AG04450 (cell line): ENCODE measurements at regions of chr12 and their contacts with region 1.

Region 1: GRCh38 chr12:94101738-94102660 is 46.4 kb upstream of the PLXNC1 start:
- DNase-seq: peak; percentile 73
- H3K4me3 ChIP-seq: peak overlapping the region; percentile 66
- H3K27ac ChIP-seq: peak overlapping the region; percentile 39
- H3K27me3 ChIP-seq: peaks cover 3% of the 10 kb centered on the region
- CTCF ChIP-seq: peak; percentile 80

Region 2: GRCh38 chr12:93514853-93515252 is 587.1 kb before region 1 on chr12:
- CTCF ChIA-PET with region 1: interaction called, 57 read pairs
- POLR2A ChIA-PET with region 1: interaction called, 3 read pairs
- DNase-seq: peak; percentile 41
- H3K4me3 ChIP-seq: no peak overlapping the region
- H3K27ac ChIP-seq: no peak overlapping the region
- H3K27me3 ChIP-seq: no peaks in the 10 kb centered on the region
- CTCF ChIP-seq: no peak

Region 3: GRCh38 chr12:93591137-93591868 is 510.7 kb before region 1 on chr12:
- CTCF ChIA-PET with region 1: interaction called, 22 read pairs
- POLR2A ChIA-PET with region 1: no interaction called
- DNase-seq: peak; percentile 32
- H3K4me3 ChIP-seq: peak overlapping the region; percentile 70
- H3K27ac ChIP-seq: peak overlapping the region; percentile 66
- H3K27me3 ChIP-seq: no peaks in the 10 kb centered on the region
- CTCF ChIP-seq: no peak

Region 4: GRCh38 chr12:93778306-93778705 is 323.7 kb before region 1 on chr12:
- CTCF ChIA-PET with region 1: interaction called, 17 read pairs
- POLR2A ChIA-PET with region 1: no interaction called
- DNase-seq: peak; percentile 64
- H3K4me3 ChIP-seq: no peak overlapping the region
- H3K27ac ChIP-seq: no peak overlapping the region
- H3K27me3 ChIP-seq: no peaks in the 10 kb centered on the region
- CTCF ChIP-seq: no peak

Region 5: GRCh38 chr12:93839064-93839463 is 262.9 kb before region 1 on chr12:
- CTCF ChIA-PET with region 1: interaction called, 24 read pairs
- POLR2A ChIA-PET with region 1: no interaction called
- DNase-seq: no peak
- H3K4me3 ChIP-seq: no peak overlapping the region
- H3K27ac ChIP-seq: no peak overlapping the region
- H3K27me3 ChIP-seq: no peaks in the 10 kb centered on the region
- CTCF ChIP-seq: no peak

Region 6: DNA sequence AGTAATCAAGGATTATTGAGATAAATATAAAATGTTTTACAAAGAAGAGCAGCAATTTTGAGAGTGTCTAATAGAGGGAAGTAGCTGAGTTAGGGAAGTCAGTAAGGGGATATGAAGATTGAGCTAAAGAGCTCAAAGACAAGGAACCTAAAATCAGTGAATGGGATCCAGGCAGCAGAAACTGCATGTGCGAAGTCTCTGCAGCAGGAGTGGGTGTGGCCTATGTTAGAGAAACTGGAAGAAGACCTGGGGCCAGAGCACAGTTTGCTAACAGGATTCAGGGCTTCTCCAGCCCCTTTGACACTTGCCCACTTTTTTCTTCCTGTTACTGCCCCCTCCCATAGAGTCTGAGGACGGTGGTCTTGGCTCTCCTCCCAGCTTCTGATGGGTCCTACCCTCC is 10.1 kb after region 1 on chr12:
- CTCF ChIA-PET with region 1: interaction called, 10 read pairs
- POLR2A ChIA-PET with region 1: no interaction called
- DNase-seq: no peak
- H3K4me3 ChIP-seq: no peak overlapping the region
- H3K27ac ChIP-seq: no peak overlapping the region
- H3K27me3 ChIP-seq: peaks cover 6% of the 10 kb centered on the region
- CTCF ChIP-seq: no peak

Region 7: GRCh38 chr12:94289461-94290312 is 187.7 kb after region 1 on chr12:
- CTCF ChIA-PET with region 1: no interaction called
- POLR2A ChIA-PET with region 1: no interaction called
- DNase-seq: no peak
- H3K4me3 ChIP-seq: no peak overlapping the region
- H3K27ac ChIP-seq: peak overlapping the region; percentile 82
- H3K27me3 ChIP-seq: no peaks in the 10 kb centered on the region
- CTCF ChIP-seq: no peak